ENCODE measurements at regions of chr7 and their contacts with region 1.

Region 1: DNA sequence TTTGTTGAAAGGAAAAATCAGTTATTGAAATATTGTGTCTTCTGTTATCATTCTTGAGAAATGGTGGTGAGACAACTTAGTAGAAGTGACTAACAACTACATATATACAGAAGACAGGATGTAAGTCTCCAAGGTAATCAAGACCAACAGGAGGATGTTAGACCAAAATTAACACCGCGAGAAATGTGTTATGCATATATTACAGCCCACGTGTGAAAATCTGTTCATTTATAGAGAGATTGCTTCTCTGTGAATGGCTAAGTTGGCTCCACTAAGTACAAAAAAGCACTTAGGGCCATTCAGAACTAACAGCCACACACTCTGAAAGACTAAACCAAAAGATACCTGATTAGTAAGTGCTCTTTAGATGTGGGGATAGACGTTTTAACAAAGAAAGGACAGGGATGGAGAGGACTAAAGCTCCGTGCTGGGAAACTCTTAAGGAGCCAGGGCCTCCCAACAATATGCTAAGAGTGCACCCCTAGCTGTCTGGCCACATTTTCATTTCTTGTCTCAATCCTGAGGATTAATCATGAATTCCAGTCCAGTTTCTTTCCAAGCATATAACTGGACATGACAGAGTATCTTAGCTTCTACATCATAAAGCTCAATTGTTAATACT is 26.5 kb downstream of the HDAC9 start:
- DNase-seq: no peak
- H3K4me3 Mint-ChIP-seq: no peak overlapping the region
- H3K27ac Mint-ChIP-seq: peak overlapping the region; percentile 37
- H3K4me1 Mint-ChIP-seq: no peaks in the 10 kb centered on the region
- H3K27me3 Mint-ChIP-seq: no peaks in the 10 kb centered on the region

Region 2: DNA sequence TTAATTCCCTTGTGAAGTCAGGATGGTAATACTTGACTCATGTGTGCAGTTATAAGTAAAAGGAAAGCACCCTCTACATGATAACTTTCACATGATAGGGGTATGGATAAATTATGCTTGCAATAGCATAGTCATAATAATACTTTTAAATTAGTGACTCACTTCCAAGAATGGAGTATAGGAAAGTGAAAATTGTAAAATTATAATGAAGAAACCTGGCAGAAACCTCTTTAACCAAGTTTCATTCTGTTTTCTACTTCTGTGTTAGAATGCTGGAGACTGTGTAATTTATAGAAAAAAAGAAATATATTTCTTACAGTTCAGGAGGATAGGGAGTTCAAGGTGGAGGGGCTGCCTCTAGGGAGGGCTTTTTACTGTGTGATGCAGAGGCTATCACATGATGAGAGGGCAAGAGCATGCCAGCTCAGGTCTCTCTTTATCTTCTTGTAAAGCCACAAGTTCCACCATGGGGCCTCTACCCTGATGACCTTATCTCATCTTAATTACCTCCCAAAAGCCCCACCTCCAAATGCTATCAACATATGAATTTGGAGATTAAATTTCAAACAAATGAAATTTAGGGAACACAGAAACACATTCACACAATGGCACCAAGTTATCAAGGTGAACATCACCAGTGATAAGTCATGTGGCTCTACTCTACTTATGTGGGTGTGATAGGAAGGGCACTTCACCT is 16.6 kb after region 1 on chr7:
- intact Hi-C with region 1: loop called (anchors 1 kb)
- DNase-seq: no peak
- H3K4me3 Mint-ChIP-seq: no peak overlapping the region
- H3K27ac Mint-ChIP-seq: no peak overlapping the region
- H3K4me1 Mint-ChIP-seq: peaks cover 7% of the 10 kb centered on the region
- H3K27me3 Mint-ChIP-seq: no peaks in the 10 kb centered on the region

Region 3: GRCh38 chr7:18583305-18583704 is 61.2 kb after region 1 on chr7:
- intact Hi-C with region 1: no loop called
- DNase-seq: no peak
- H3K4me3 Mint-ChIP-seq: no peak overlapping the region
- H3K27ac Mint-ChIP-seq: no peak overlapping the region
- H3K4me1 Mint-ChIP-seq: no peaks in the 10 kb centered on the region
- H3K27me3 Mint-ChIP-seq: no peaks in the 10 kb centered on the region